ENCODE measurements at regions of chr16 and their contacts with region 1.

Region 1: DNA sequence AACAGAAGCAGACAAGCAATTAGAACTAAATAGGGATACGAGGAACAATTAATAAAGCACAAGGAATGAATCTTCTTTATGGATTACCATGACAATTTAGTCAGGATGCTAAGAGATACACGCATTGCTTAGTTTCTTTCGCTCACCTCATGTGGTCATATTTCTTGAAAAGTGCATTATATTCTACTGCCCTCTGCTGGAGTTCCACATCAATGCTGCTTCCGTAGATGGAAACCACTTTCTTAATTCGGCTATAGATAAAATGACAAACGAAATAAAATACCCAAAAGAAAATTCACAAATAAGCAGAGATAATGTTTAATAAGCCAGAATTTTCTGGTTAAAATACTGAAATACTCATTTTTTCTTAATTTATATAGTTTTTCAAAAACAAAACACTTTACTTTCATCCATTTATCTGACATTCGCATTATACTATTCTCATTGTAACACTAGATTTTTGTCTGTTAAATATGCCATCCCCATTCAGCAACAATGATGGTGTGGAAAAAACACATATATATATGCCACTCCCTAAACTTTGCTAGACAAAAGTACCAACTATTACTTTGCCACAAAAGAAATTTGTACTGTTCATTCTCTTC is 22.0 kb upstream of the PHLPP2 start:
- DNase-seq: peak in 8 of 14 experiments; percentile 7 to 75 (median 26)
- ATAC-seq: peak; percentile 76
- H3K4me3 ChIP-seq: no peak overlapping the region
- H3K4me3 Mint-ChIP-seq: no peak overlapping the region
- H3K27ac ChIP-seq: no peak overlapping the region
- H3K27ac Mint-ChIP-seq: no peak overlapping the region
- H3K4me1 ChIP-seq: no peaks in the 10 kb centered on the region
- H3K4me1 Mint-ChIP-seq: peaks cover 5% of the 10 kb centered on the region
- H3K27me3 ChIP-seq: no peaks in the 10 kb centered on the region
- H3K27me3 Mint-ChIP-seq: no peaks in the 10 kb centered on the region
- CTCF ChIP-seq: peak; percentile 74

Region 2: GRCh38 chr16:71669932-71670536 is 76.5 kb before region 1 on chr16:
- CTCF ChIA-PET with region 1: no interaction called
- POLR2A ChIA-PET with region 1: no interaction called
- intact Hi-C with region 1: loop called in 1 of 2 experiments (anchors 10 kb)
- DNase-seq: no peak
- ATAC-seq: no peak
- H3K4me3 ChIP-seq: no peak overlapping the region
- H3K4me3 Mint-ChIP-seq: no peak overlapping the region
- H3K27ac ChIP-seq: no peak overlapping the region
- H3K27ac Mint-ChIP-seq: no peak overlapping the region
- H3K4me1 ChIP-seq: no peaks in the 10 kb centered on the region
- H3K4me1 Mint-ChIP-seq: no peaks in the 10 kb centered on the region
- H3K27me3 ChIP-seq: no peaks in the 10 kb centered on the region
- H3K27me3 Mint-ChIP-seq: no peaks in the 10 kb centered on the region
- CTCF ChIP-seq: no peak

Region 3: GRCh38 chr16:71723537-71724319 is 22.8 kb before region 1 on chr16:
- CTCF ChIA-PET with region 1: interaction called, 3 read pairs
- POLR2A ChIA-PET with region 1: no interaction called
- intact Hi-C with region 1: loop called in 1 of 2 experiments (anchors 2 kb)
- DNase-seq: peak; percentile 59 to 93 (median 78)
- ATAC-seq: peak; percentile 81
- H3K4me3 ChIP-seq: peak overlapping the region; percentile 84
- H3K4me3 Mint-ChIP-seq: peak overlapping the region; percentile 92
- H3K27ac ChIP-seq: no peak overlapping the region
- H3K27ac Mint-ChIP-seq: peak overlapping the region; percentile 74
- H3K4me1 ChIP-seq: peaks cover 11% of the 10 kb centered on the region
- H3K4me1 Mint-ChIP-seq: peaks cover 18% of the 10 kb centered on the region
- H3K27me3 ChIP-seq: no peaks in the 10 kb centered on the region
- H3K27me3 Mint-ChIP-seq: no peaks in the 10 kb centered on the region
- CTCF ChIP-seq: no peak